WTC11 (cell line): ENCODE measurements at regions of chr2 and their contacts with region 1.

Region 1: DNA sequence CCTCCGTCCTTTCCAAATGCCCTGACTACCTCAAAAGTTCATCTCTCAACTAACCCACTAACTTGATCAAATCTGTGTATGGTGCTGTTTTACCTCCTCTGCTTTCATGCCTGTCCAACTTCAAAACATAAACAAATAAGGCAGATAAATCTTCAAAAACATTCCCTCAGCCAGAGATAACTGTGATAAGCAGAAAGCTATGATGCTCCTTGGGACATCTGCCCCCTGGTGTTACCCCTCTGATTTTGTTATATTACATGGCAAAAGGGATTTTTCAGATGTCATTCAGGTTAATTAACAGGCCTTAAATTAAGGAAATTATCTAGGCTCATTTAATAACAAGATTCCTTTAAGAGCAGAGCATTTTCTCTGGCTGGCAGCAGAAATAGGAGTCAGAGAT is 810.8 kb upstream of the CHAC2 start:
- DNase-seq: no peak
- ATAC-seq: no peak
- H3K4me3 Mint-ChIP-seq: no peak overlapping the region
- H3K27ac Mint-ChIP-seq: no peak overlapping the region
- H3K4me1 Mint-ChIP-seq: peaks cover 2% of the 10 kb centered on the region
- H3K27me3 Mint-ChIP-seq: no peaks in the 10 kb centered on the region
- CTCF ChIP-seq: no peak

Region 2: GRCh38 chr2:52810460-52810859 is 146.3 kb before region 1 on chr2:
- CTCF ChIA-PET with region 1: interaction called, 13 read pairs
- POLR2A ChIA-PET with region 1: no interaction called
- DNase-seq: no peak
- ATAC-seq: peak; percentile 92
- H3K4me3 Mint-ChIP-seq: no peak overlapping the region
- H3K27ac Mint-ChIP-seq: peak overlapping the region; percentile 63; the same call in 1 of the 2 replicates
- H3K4me1 Mint-ChIP-seq: peaks cover 4% of the 10 kb centered on the region; the same call in 1 of the 2 replicates
- H3K27me3 Mint-ChIP-seq: no peaks in the 10 kb centered on the region
- CTCF ChIP-seq: no peak